ENCODE measurements at regions of chr6 and their contacts with region 1.

Region 1: GRCh38 chr6:27518881-27519795 is 46.2 kb upstream of the ZNF184 start:
- DNase-seq: peak; percentile 48
- ATAC-seq: peak; percentile 72
- H3K4me3 Mint-ChIP-seq: peak overlapping the region; percentile 83
- H3K27ac Mint-ChIP-seq: peak overlapping the region; percentile 82
- H3K4me1 Mint-ChIP-seq: peaks cover 15% of the 10 kb centered on the region
- H3K27me3 Mint-ChIP-seq: peaks cover 30% of the 10 kb centered on the region
- CTCF ChIP-seq: no peak

Region 2: DNA sequence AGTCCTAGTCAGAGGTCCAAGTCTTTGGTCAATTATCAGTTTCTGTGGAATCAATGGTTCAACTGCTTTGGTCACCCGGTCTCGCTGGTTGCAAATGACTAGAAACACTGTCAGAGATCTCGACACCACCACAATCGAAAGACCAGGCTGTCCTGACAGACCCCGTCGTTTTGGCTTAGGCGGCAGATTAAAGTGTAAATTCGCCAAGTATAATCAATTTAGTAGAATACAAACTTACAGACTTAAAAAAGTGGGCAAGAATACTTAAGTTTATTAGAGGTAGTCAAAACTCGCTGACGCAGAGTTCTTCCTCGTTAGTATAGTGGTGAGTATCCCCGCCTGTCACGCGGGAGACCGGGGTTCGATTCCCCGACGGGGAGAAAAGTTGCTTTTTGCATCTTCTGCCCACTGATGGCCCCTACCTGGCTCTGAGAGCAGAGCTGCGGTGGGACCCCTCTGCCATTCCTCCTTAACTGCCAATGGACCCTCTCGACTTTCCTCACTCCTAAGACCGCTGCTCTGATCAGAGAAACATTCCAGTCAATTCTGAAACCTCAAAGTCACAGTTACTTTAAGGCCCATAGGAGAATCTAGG is 15.6 kb before region 1 on chr6:
- CTCF ChIA-PET with region 1: interaction called, 25 read pairs
- POLR2A ChIA-PET with region 1: interaction called, 4 read pairs
- intact Hi-C with region 1: loop called (anchors 1 kb)
- DNase-seq: peak; percentile 61
- ATAC-seq: peak; percentile 39
- H3K4me3 Mint-ChIP-seq: peak overlapping the region; percentile 87
- H3K27ac Mint-ChIP-seq: peak overlapping the region; percentile 77
- H3K4me1 Mint-ChIP-seq: peaks cover 35% of the 10 kb centered on the region
- H3K27me3 Mint-ChIP-seq: peaks cover 12% of the 10 kb centered on the region
- CTCF ChIP-seq: no peak

Region 3: DNA sequence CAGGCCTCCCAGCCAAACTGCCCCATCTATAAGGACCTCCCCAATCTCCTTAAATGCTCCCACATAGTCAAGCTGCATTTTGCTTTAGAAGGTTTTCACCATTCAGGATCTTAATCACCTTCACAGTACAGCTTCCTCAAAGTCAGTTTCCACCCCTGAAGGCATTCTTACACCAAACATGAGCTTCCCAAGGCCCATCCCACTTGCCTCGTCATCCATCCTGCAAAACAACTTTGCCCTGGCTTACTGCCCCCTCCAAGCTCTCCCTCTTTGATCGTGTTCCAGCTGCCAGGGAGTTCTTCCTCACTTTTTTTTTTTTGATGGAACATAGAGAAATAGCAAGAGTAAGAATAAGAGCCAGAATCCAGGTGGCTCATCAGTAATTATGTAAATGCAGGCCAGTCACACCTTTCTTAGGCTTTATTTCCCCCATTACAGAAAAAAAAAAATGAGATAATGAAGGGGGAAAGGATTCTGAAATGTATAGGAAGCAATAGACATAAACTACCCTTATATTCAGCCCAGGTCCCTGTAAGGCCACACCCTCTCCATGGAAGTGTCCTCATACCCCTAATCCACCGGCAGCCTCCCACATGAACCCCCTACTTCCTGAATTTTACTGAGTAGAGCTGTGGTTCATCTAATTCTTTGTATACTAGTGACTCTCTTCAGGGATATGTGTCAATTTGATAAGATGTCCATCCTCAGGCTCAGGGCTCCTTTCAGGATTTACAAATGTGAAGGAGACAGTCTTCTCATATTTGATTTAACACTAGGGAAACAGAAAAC is 1392.0 kb after region 1 on chr6:
- CTCF ChIA-PET with region 1: no interaction called
- POLR2A ChIA-PET with region 1: no interaction called
- intact Hi-C with region 1: no loop called
- DNase-seq: no peak
- ATAC-seq: no peak
- H3K4me3 Mint-ChIP-seq: no peak overlapping the region
- H3K27ac Mint-ChIP-seq: no peak overlapping the region
- H3K4me1 Mint-ChIP-seq: no peaks in the 10 kb centered on the region
- H3K27me3 Mint-ChIP-seq: no peaks in the 10 kb centered on the region
- CTCF ChIP-seq: no peak